Right ventricle myocardium superior (tissue), 1 donor: ENCODE measurements at regions of chr20 and their contacts with region 1.

Region 1: DNA sequence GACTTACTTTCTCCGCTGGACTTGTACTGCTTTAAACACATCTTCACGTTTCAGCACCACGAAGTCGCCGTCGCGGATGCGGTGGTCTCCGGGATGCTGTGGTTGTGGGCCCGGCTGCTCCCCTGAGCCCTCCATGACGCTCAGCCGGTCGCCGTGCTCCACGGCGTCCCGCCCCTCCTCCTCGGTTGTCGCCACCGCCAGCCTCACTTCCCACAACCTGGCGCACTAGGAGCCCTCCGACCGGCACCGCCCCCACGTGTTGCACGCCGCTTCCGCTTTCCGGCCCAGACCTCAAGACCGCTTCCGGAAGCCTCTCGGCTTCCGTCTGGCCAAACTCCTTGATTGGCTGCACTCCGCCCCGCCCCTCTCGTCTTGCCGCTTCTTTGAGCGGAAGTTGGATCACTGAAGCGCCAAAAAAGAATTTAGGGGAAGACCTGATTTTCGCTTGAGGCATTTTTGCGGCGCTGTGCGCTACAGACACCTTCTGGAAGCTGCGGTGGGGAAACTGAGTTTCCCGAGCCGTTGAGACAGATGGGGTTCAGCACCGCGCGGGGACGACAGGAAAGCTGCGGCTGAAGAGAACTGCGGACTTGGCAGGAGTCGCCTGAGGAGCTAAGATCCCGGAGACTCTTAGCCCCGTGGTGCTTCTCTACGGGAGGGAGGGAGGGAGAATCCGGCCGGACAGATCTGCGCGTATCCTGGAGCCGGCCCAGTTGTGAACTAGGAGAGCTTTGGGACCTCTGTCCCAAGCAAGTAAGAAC is at the starts of genes MCM8 and TRMT6:
- DNase-seq: peak; percentile 98
- ATAC-seq: peak; percentile 100
- total RNA-seq, gene MCM8: 6.6 TPM
- total RNA-seq, gene TRMT6: 5.7 TPM

Region 2: DNA sequence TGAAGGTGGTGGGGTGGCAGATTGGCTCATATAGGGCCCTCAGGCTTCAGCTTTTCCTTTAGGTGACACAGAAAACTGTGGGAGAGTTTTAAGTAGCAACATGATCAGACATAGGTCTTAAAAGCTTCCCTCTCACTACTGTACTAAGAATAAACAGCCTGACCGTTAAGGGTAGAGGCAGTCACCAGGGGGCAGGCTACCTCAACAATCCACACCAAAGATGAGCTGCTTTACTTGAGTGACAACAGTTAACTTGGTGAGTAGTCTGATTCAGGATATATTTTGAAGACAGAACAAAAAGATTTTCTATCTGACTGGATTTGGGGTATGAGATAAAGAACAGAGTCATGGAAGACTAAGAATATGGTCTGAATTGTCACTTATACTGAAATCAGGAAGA is 393.3 kb before region 1 on chr20:
- intact Hi-C with region 1: loop called (anchors 10 kb)
- DNase-seq: peak; percentile 52
- ATAC-seq: peak; percentile 80

Region 3: GRCh38 chr20:6034134-6034969 is 83.9 kb after region 1 on chr20:
- intact Hi-C with region 1: no loop called
- DNase-seq: no peak
- ATAC-seq: peak; percentile 88

Region 4: GRCh38 chr20:6074145-6074561 is 123.7 kb after region 1 on chr20:
- intact Hi-C with region 1: loop called (anchors 10 kb)
- DNase-seq: no peak
- ATAC-seq: peak; percentile 87